Activated naive CD8-positive, alpha-beta T cell treated with anti-CD3 and anti-CD28 coated beads, Interleukin-2, amount 10 ng/mL, durations not matched to agents 7 days and 5 days (primary cell): ENCODE measurements at regions of chr6 and their contacts with region 1.

Region 1: DNA sequence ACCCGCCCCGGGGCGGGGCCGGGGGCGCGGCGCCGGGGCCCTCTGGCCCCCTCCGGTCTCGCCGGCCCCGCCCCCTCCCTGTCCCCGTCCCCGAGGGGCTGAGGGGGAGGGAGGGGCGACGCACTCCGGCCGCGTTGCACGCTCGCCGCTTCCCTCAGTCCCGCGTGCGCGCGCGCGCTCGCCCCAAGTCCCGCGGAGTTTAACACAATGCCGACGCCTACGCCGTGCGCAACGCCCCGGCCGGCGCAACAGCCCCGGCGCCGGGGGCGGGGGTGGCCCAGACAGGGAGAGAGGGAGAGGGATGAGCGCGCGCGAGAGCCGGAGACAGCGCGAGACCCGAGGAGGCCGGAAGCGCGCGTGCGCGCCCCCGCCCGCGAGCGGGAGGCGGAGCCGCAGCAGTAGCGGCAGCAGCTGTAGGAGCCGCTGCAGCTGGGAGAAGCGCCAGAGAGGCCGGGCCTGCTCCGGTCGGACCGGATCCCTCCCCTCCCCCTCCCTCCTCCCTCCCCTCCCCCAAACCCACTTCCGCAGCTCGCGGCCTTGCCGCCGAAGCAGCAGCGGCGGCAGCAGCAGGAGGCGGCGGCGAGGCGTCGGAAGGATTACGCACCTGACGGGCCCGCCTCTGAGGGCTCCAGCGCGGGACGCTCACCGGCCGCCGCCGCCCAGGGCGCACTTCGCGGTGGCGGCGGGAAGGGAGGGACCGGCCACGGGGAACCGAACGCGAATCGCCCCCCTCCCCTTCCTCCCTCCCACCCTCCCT is 905 bp downstream of the ZBTB2 start:
- DNase-seq: peak; percentile 99
- ATAC-seq: peak; percentile 81
- H3K4me3 Mint-ChIP-seq: peak overlapping the region; percentile 45
- H3K27ac Mint-ChIP-seq: peak overlapping the region; percentile 73
- H3K4me1 Mint-ChIP-seq: peaks cover 38% of the 10 kb centered on the region
- H3K27me3 Mint-ChIP-seq: no peaks in the 10 kb centered on the region

Region 2: DNA sequence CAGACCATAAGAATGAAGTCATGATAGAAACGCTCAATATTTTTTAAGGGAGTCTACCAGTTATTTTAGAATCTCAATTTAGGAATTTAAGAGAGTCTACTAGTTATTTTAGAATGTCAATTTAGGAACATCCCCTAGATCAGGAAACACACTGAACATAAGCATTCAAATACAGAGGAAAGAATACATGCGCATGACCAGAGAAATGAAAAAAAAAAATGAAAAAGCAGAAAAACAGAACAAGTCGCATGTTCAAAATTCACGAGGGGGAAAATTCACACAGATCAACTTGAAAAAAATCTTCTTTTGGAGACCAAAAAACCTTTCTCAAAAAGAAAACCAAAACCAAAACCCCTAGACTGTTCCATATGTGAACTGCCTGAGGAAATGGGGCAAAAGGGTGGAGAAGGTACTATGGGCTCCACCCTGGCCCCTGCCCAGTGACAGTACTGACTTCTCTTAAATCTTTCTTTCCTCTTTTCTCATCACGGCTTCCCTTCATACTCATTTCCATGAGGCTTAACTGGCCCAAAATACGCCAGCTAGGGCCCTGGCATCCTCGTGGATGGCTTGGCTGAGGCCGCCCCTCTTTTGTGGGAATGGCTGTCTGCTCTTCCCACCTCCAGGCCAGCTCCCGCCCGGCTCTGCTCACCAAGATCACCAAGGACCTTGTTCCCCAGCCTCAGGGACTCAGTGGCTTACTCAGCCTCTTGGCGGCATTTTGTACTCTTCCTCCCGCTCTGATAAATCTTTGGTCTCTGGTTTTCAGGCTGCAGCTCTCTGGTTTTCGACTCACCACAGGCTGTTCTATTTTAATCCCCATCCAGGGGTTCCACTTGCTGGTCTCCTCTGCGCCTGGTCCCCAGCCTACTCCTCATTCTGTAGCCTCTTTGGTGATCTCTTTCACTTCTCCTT is 10.3 kb before region 1 on chr6:
- POLR2A ChIA-PET with region 1: interaction called, 147 read pairs
- DNase-seq: peak; percentile 48
- ATAC-seq: peak; percentile 75
- H3K4me3 Mint-ChIP-seq: peak overlapping the region; percentile 88
- H3K27ac Mint-ChIP-seq: peak overlapping the region; percentile 97
- H3K4me1 Mint-ChIP-seq: peaks cover 55% of the 10 kb centered on the region
- H3K27me3 Mint-ChIP-seq: no peaks in the 10 kb centered on the region

Region 3: GRCh38 chr6:151413372-151414145 is 23.1 kb after region 1 on chr6:
- POLR2A ChIA-PET with region 1: interaction called, 11 read pairs
- DNase-seq: no peak
- ATAC-seq: peak; percentile 89
- H3K4me3 Mint-ChIP-seq: peak overlapping the region; percentile 28
- H3K27ac Mint-ChIP-seq: peak overlapping the region; percentile 77
- H3K4me1 Mint-ChIP-seq: peaks cover 14% of the 10 kb centered on the region
- H3K27me3 Mint-ChIP-seq: no peaks in the 10 kb centered on the region

Region 4: DNA sequence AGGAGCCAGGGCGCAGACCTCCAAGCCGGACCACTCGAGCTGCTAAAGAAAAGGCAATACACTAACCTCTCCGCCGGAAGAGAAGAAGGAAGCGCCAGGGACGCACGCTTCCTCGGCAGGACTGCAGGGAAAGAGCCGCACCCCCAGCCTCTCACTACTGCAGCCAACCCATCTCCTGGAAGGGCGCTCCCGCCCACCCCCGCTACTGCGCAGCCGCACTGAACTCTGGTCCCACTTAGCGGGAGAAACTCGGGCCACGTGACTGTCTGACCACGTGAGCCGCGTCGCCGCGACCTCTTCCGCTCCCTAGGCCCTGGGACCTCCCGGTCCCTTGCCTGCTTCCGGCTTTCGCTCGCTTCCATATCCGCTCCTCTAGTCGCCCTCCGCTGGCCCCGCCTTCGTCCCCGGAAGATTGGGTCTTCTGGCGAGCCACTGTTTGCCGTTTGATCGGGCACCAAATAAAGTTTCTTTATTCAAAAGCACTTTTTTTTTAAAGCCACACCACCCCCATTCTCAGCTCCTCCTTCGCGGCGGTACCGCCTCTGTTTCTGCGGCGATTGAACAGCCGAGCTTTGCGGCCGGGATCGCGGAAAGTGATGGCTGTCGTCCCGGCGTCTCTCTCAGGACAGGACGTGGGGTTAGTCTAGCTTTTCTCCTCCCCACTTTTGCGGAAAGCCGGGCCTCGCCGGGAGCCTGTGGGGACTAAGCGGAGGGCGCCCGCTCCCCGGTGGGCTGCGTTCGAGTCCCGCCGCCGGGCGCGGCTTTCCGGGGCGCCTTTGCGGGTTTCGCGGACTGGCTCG is 61.7 kb after region 1 on chr6 and contains the start of gene RMND1:
- POLR2A ChIA-PET with region 1: interaction called, 29 read pairs
- DNase-seq: peak; percentile 98
- ATAC-seq: peak; percentile 98
- H3K4me3 Mint-ChIP-seq: peak within 1 kb of the TSS; percentile 95
- H3K27ac Mint-ChIP-seq: peak within 1 kb of the TSS; percentile 92
- H3K4me1 Mint-ChIP-seq: peaks cover 21% of the 10 kb centered on the region
- H3K27me3 Mint-ChIP-seq: no peaks in the 10 kb centered on the region
- total RNA-seq, gene RMND1: 20.6 to 22.0 TPM